Dorsolateral prefrontal cortex (tissue), 120 donors: ENCODE measurements at regions of chr9 and their contacts with region 1.

Region 1: GRCh38 chr9:125189361-125190289 is at the start of gene PPP6C:
- DNase-seq: peak; percentile 96 to 99 (median 98)
- H3K4me3 ChIP-seq: peak within 1 kb of the TSS; percentile 63 to 100 (median 97)
- H3K27ac ChIP-seq: peak within 1 kb of the TSS; percentile 47 to 96 (median 87)
- H3K27me3 ChIP-seq: no peaks in the 10 kb centered on the region
- CTCF ChIP-seq: peak in 55 of 56 donors; percentile 45 to 89 (median 74)
- total RNA-seq, gene PPP6C: 30.0 to 59.2 (median 44.9) TPM

Region 2: GRCh38 chr9:124008694-124009530 is 1180.7 kb before region 1 on chr9:
- intact Hi-C with region 1: no loop called
- DNase-seq: peak in 2 of 10 donors; percentile 34 to 54
- H3K4me3 ChIP-seq: peak overlapping the region in 58 of 59 donors; percentile 19 to 69 (median 55)
- H3K27ac ChIP-seq: peak overlapping the region in 55 of 59 donors; percentile 0 to 90 (median 64)
- H3K27me3 ChIP-seq: peaks cover 0 to 99% (median 82%) of the 10 kb centered on the region in 45 donors
- CTCF ChIP-seq: no peak

Region 3: GRCh38 chr9:124940693-124941453 is 248.8 kb before region 1 on chr9 and contains the start of gene GOLGA1:
- intact Hi-C with region 1: loop called (anchors 5 kb)
- DNase-seq: peak; percentile 87 to 95 (median 92)
- H3K4me3 ChIP-seq: peak within 1 kb of the TSS; percentile 58 to 100 (median 95)
- H3K27ac ChIP-seq: peak within 1 kb of the TSS; percentile 63 to 99 (median 96)
- H3K27me3 ChIP-seq: no peaks in the 10 kb centered on the region
- CTCF ChIP-seq: peak in 27 of 56 donors; percentile 5 to 58 (median 28)
- total RNA-seq, gene GOLGA1: 16.5 to 38.0 (median 25.8) TPM

Region 4: DNA sequence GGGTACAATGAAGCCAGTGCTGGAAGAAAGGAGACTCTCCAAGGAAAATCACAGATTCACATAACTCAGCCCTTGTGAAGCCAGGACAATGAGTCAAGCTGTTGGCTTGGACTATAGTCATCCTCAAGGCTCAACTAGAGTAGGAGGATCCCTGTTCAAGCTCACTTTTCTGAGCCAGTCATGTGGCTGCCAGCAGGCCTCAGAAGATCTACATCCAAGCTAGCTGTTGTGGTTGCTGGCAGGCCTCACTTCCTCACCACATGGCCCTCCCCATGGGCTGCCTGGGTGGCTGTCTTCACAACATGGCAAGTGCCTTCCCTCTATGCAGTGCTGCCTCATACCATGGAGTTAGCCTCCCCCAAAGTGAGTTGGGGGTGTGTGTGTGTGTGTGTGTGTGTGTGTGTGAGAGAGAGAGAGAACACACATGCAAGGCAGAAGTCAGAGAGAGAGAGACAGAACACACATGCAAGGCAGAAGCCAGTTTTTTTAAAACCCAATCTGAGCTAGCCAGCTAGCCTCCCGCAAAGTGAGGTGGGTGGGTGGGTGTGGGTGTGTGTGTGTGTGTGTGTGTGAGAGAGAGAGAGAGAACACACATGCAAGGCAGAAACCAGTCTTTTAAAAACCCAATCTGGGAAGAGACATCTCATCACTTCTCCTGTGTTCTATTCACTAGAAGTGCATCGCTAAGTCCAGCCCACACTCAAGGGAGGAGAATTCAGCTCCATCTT is 63.4 kb before region 1 on chr9:
- intact Hi-C with region 1: no loop called
- DNase-seq: peak; percentile 50 to 92 (median 83)
- H3K4me3 ChIP-seq: no peak overlapping the region
- H3K27ac ChIP-seq: peak overlapping the region in 39 of 59 donors; percentile 4 to 86 (median 62)
- H3K27me3 ChIP-seq: no peaks in the 10 kb centered on the region
- CTCF ChIP-seq: no peak

Region 5: GRCh38 chr9:125143375-125144090 is 46.1 kb before region 1 on chr9 and contains the start of gene SCAI:
- intact Hi-C with region 1: loop called in 1 of 2 experiments (anchors 5 kb)
- DNase-seq: peak; percentile 98 to 100 (median 99)
- H3K4me3 ChIP-seq: peak within 1 kb of the TSS; percentile 33 to 80 (median 68)
- H3K27ac ChIP-seq: peak within 1 kb of the TSS in 42 of 59 donors; percentile 8 to 84 (median 62)
- H3K27me3 ChIP-seq: no peaks in the 10 kb centered on the region
- CTCF ChIP-seq: peak; percentile 93 to 100 (median 99)
- total RNA-seq, gene SCAI: 19.8 to 73.6 (median 49.9) TPM

Region 6: DNA sequence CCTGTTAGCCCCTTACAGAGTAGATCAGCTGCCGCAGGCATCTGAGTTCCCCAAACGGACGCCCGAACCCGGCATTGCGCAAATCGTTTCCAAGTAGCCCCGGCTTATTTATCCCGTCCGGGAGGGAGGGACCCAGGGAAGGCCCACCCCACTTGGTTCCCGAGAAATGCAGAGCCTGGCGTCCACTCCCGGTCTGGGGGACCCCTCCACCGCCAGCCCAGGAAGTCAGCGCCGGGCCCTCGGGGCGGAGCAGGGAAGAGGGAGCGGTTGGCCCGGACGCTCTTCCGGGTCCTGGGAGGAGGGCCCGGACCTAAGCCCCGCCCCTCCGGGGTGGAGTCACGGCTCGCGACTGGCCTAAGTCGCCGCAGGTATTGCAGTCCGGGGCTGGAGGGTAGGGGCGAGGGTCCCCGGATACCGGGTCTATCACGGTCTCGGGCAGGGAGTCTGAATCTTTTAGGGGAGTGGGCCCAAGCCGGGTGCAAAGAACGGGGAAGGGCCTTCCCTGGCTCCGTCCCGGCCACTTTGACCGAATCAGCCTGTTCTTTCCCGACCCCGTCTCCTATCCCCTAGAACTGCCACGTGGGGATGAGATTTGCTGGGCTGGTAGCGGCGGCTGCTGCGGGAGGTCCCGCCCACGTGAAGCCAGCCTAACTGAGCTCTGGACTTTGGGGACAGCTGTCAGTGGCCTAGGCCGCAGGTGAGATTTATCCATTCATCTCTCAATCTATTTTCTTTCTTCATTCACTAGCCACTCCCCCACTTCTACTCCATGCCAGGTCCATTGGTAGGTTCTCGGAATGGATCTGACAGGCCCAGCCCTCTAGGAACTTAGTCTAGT is 10.8 kb after region 1 on chr9 and contains the start of gene RABEPK:
- intact Hi-C with region 1: loop called in 1 of 2 experiments (anchors 1 kb)
- DNase-seq: peak; percentile 82 to 95 (median 90)
- H3K4me3 ChIP-seq: peak within 1 kb of the TSS; percentile 67 to 100 (median 88)
- H3K27ac ChIP-seq: peak within 1 kb of the TSS in 57 of 59 donors; percentile 36 to 96 (median 89)
- H3K27me3 ChIP-seq: no peaks in the 10 kb centered on the region
- CTCF ChIP-seq: peak in 10 of 56 donors; percentile 4 to 48 (median 16)
- total RNA-seq, gene RABEPK: 15.3 to 31.2 (median 21.3) TPM

Region 7: GRCh38 chr9:125241000-125241862 is 51.6 kb after region 1 on chr9 and contains the start of gene HSPA5:
- intact Hi-C with region 1: loop called in 1 of 2 experiments (anchors 2 kb)
- DNase-seq: peak; percentile 99 to 100 (median 100)
- H3K4me3 ChIP-seq: peak within 1 kb of the TSS; percentile 68 to 100 (median 98)
- H3K27ac ChIP-seq: peak within 1 kb of the TSS; percentile 51 to 99 (median 93)
- H3K27me3 ChIP-seq: no peaks in the 10 kb centered on the region
- CTCF ChIP-seq: peak in 22 of 56 donors; percentile 3 to 47 (median 24)
- total RNA-seq, gene HSPA5: 62.3 to 341 (median 107) TPM

Region 8: DNA sequence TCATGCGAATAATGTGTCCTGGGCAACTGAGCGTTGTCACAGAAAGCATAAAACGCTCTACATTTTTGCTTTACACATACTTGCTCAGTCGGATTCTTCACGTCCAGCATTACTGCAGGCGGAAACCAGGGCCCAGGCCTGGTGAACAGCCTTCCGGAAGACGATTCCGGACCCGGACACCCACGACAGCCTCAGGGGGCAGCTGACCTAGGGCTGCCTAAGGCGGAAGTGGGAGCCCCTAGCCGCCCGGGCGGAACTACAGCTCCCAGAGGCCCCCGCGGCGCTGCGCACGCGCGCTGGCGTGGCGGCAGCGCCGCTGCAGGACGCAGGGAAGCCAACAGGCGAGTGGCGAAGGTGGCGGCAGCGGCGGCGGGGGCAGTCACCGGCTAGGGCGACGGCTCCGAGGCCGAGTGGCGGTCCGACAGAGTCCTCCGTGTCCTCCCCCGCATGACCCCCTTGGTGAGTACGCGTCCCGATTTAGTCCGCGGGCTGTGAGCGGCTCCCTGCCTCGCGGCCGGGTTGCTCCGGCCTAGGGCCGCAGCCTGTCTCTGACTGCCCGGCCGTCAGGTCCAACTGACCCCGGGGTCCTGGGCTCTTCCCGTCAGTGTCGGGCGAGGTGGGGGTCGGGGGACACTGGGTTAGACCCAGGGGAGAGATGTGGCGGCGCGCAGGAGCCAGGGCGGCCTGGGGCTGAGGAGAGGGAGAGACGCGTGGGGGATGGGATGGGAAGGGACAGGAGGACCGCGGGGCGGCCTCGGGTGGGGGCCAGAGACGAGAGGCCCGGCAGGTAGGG is 72.1 kb after region 1 on chr9 and contains the start of gene GAPVD1:
- intact Hi-C with region 1: loop called in 1 of 2 experiments (anchors 5 kb)
- DNase-seq: peak; percentile 64 to 94 (median 81)
- H3K4me3 ChIP-seq: peak within 1 kb of the TSS; percentile 63 to 100 (median 96)
- H3K27ac ChIP-seq: peak within 1 kb of the TSS; percentile 13 to 94 (median 85)
- H3K27me3 ChIP-seq: no peaks in the 10 kb centered on the region
- CTCF ChIP-seq: peak; percentile 10 to 77 (median 56)
- total RNA-seq, gene GAPVD1: 52.7 to 86.4 (median 69.3) TPM